ENCODE measurements at regions of chr3 and their contacts with region 1.

Region 1: GRCh38 chr3:183815563-183815940 is 9.8 kb downstream of the MAP6D1 start:
- DNase-seq: peak in 2 of 5 donors; percentile 22 to 61
- H3K4me3 ChIP-seq: peak overlapping the region; percentile 15
- H3K4me3 Mint-ChIP-seq: peak overlapping the region; percentile 44 to 81 (median 75)
- H3K27ac ChIP-seq: peak overlapping the region; percentile 51
- H3K27ac Mint-ChIP-seq: peak overlapping the region; percentile 77 to 96 (median 90)
- H3K4me1 ChIP-seq: peaks cover 13% of the 10 kb centered on the region
- H3K4me1 Mint-ChIP-seq: peaks cover 19 to 28% (median 24%) of the 10 kb centered on the region in 3 donors
- H3K27me3 ChIP-seq: no peaks in the 10 kb centered on the region
- H3K27me3 Mint-ChIP-seq: no peaks in the 10 kb centered on the region

Region 2: DNA sequence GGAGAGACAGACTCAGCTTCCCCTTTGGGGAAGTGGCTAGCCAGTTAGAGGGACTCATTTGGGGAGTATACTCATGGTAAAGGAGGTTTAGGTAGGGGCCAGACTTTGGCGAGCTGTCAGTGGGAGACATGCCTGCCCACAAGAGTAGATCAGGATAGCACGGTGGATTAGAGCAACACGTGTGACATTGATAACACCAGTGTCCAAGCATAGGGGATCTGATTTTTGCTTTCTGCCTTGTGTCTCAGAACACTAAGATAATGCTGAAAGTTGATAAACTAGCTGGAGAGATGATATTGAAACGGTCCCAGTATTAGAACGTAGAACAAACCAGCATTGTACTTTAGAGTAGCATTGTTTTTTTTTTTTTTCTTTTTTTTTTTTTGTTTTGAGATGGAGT is 16.1 kb before region 1 on chr3:
- CTCF ChIA-PET with region 1: no interaction called
- POLR2A ChIA-PET with region 1: interaction called, 10 read pairs
- DNase-seq: no peak
- H3K4me3 ChIP-seq: no peak overlapping the region
- H3K4me3 Mint-ChIP-seq: no peak overlapping the region
- H3K27ac ChIP-seq: no peak overlapping the region
- H3K27ac Mint-ChIP-seq: peak overlapping the region in 3 of 8 donors; percentile 13 to 72 (median 13)
- H3K4me1 ChIP-seq: no peaks in the 10 kb centered on the region
- H3K4me1 Mint-ChIP-seq: no peaks in the 10 kb centered on the region
- H3K27me3 ChIP-seq: no peaks in the 10 kb centered on the region
- H3K27me3 Mint-ChIP-seq: no peaks in the 10 kb centered on the region

Region 3: DNA sequence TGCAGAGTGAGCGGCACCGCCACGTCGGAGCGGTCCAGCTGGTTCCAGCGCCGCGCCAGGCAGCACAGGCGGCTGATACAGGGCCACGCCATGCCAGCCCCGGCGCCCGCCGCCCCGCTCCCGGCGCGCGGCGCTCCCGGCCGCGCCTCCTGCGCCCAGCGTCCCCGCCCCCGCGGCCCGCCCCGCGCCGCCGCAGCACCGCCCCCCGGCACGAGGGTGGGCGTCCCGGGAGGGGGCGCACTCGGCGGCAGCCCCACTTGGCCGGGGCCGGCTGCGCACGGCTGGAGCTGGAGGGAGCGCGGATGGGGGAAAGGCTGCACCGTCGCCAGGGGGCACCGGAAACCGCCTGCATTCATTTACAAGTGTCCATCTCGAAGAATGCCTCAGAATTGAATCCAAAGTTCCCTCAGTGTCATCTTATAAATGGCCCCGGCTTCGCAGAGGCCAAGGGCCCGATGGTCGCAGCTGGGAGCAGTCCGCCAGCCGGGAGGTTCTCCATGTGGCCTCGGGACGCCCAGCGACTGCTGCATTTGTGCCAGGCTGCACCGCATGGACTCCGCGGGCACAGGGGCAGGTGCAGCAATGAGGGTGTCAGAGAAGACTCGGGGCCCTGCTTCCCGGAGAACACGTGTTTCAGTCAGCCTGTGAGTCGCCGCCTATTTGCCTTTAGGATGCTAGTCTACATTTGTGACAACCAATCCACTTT is 10.1 kb after region 1 on chr3 and contains the start of gene MAP6D1:
- CTCF ChIA-PET with region 1: interaction called, 8 read pairs
- POLR2A ChIA-PET with region 1: interaction called, 10 read pairs
- DNase-seq: peak; percentile 24 to 71 (median 40)
- H3K4me3 ChIP-seq: peak within 1 kb of the TSS; percentile 46
- H3K4me3 Mint-ChIP-seq: peak within 1 kb of the TSS; percentile 77 to 90 (median 82)
- H3K27ac ChIP-seq: no peak within 1 kb of the TSS
- H3K27ac Mint-ChIP-seq: peak within 1 kb of the TSS in 7 of 8 donors; percentile 16 to 90 (median 62)
- H3K4me1 ChIP-seq: peaks cover 10% of the 10 kb centered on the region
- H3K4me1 Mint-ChIP-seq: peaks cover 11 to 23% (median 19%) of the 10 kb centered on the region in 3 donors
- H3K27me3 ChIP-seq: no peaks in the 10 kb centered on the region
- H3K27me3 Mint-ChIP-seq: no peaks in the 10 kb centered on the region
- total RNA-seq, gene MAP6D1: 3.7 to 3.8 TPM